ENCODE measurements at regions of chr12 and their contacts with region 1.

Region 1: GRCh38 chr12:109385339-109386067 is 37.8 kb downstream of the MYO1H start:
- DNase-seq: no peak
- H3K4me3 Mint-ChIP-seq: no peak overlapping the region
- H3K27ac Mint-ChIP-seq: no peak overlapping the region
- H3K4me1 Mint-ChIP-seq: peaks cover 5% of the 10 kb centered on the region
- H3K27me3 Mint-ChIP-seq: peaks cover 21% of the 10 kb centered on the region

Region 2: DNA sequence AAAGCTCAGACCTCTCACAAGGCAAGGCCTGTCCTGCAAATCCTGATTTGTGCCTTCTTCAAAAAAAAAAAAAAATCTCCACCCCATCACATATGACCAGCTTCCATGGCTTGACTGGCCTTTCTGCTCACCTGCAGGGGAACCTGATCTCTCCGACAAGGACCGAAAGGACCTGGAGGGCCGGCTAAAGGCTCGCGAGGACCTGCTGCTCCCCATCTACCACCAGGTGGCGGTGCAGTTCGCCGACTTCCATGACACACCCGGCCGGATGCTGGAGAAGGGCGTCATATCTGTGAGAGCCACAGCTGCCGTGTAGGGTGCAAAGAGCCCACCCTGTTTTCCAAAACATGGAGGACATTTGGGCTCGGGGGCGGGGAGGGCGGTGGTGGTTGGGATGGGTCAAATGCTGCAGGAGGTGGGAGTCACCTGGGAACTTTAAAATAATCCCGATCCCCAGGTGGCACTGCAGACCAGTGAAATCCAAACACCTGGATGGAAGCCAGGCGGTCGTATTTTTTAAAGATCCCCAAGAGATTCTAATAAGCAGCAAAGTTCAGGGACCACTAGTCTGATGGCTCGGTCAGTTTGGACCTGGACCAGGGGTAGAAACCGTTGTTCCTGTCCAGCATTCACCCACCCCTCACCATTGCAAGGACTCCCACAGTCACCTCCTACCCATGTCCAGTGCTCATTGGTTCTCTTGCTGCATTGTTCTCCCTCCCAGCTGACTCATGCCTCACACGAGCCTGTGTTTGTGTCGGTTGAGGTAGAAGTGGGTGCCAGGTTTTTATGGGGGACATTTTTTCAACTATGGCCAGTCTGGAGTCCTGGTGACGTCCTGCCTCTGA is 121.2 kb before region 1 on chr12:
- intact Hi-C with region 1: loop called (anchors 2 kb)
- DNase-seq: peak; percentile 20
- H3K4me3 Mint-ChIP-seq: no peak overlapping the region
- H3K27ac Mint-ChIP-seq: no peak overlapping the region
- H3K4me1 Mint-ChIP-seq: no peaks in the 10 kb centered on the region
- H3K27me3 Mint-ChIP-seq: no peaks in the 10 kb centered on the region

Region 3: DNA sequence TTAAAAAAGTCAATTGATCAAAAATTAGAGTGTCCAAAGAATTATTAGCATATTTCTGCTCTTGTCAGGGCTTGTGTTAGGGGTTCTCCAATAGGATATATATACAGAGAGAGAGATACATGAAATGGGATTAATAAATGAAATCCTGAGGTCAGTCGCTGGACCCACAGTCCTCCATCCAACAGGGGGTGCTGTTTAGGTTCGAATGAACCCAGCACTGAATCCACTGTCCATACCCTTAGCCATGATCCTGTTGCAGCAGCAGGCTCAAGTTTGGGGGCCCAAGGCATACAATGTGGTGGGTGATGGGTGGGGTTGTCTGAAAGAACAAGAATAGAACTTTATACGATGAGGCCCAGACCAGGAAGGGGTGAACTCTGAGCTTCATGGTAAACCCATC is 38.6 kb before region 1 on chr12:
- intact Hi-C with region 1: loop called (anchors 2 kb)
- DNase-seq: no peak
- H3K4me3 Mint-ChIP-seq: no peak overlapping the region
- H3K27ac Mint-ChIP-seq: no peak overlapping the region
- H3K4me1 Mint-ChIP-seq: no peaks in the 10 kb centered on the region
- H3K27me3 Mint-ChIP-seq: peaks cover 23% of the 10 kb centered on the region